ENCODE measurements at regions of chr6 and their contacts with region 1.

Region 1: GRCh38 chr6:142692942-142693341 is 252.0 kb downstream of the HIVEP2 start:
- DNase-seq: peak in 1 of 2 donors; percentile 88
- H3K4me3 ChIP-seq: peak overlapping the region in 1 of 2 donors; percentile 22
- H3K27ac ChIP-seq: peak overlapping the region; percentile 41 to 65
- H3K4me1 ChIP-seq: peaks cover 3 to 37% of the 10 kb centered on the region in 2 donors
- H3K27me3 ChIP-seq: no peaks in the 10 kb centered on the region
- CTCF ChIP-seq: peak; percentile 88 to 94 (median 89)

Region 2: DNA sequence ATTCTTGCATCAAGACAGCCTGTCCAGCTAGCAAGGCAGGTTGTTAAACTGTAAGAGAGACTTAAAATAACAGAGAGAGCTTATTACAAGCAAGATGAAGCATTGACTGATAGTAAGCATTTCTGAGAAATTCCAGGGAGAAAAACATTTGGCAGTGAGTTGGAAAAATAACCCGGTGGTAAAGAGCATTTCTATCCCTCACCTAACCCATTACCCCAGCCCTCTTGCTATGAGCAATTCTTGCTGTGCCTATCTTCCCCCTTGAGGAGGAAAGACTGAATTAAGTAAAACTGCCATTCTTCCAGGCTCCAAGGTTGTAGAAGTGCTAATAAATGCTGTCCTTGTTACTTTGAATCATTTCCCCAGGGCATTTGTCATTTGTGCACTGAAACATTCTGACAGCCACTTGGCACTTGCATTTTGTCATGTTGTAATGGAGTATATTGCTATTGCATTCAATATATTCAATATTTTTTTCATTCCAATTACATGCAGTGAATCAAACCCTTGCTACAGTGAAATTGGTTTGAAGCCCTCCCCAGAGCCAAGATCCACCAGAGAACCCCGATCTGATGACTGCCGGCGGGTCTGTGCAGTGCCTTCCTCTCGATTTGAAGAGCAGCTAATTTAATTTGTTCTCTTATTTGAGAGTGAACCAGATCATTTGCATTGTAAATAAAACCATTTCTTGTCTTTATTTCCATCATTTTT is 39.1 kb before region 1 on chr6:
- intact Hi-C with region 1: no loop called
- DNase-seq: no peak
- H3K4me3 ChIP-seq: no peak overlapping the region
- H3K27ac ChIP-seq: no peak overlapping the region
- H3K4me1 ChIP-seq: no peaks in the 10 kb centered on the region
- H3K27me3 ChIP-seq: no peaks in the 10 kb centered on the region
- CTCF ChIP-seq: no peak

Region 3: DNA sequence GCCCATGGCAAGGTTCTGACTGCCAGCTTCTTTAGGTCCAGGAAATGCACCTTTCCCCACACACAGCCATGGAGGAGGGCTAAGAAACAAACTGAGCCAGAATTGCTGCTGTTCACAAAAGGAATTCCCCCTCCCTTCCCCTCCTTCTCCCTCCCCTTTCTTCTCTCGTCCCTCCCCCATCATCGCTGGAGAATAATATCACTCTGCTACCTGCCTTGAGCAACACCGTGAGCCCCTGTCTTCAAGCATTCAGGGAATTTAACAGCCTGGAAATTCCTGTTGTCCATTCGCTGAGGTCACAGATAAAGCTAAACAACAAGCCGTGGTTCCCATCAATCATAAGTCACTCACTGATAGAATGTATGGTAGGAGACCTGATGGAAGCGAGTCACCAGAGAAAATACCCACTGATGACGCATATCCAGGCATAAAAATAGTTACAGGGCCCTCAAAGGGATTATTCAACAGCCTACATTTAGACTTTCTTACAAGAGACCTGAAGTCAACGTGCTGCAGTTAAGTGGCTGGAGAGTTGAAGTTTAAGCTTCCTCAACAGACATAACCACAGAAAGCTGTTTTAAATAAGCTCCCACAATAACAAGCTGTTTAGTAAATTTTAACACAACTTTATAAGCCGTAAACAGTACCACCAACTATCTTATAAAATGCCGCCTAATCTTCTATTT is 192.4 kb after region 1 on chr6:
- intact Hi-C with region 1: loop called (anchors 2 kb)
- DNase-seq: peak in 1 of 2 donors; percentile 80
- H3K4me3 ChIP-seq: peak overlapping the region; percentile 48 to 60
- H3K27ac ChIP-seq: peak overlapping the region; percentile 52 to 60
- H3K4me1 ChIP-seq: peaks cover 0 to 15% of the 10 kb centered on the region in 2 donors
- H3K27me3 ChIP-seq: no peaks in the 10 kb centered on the region
- CTCF ChIP-seq: no peak

Region 4: GRCh38 chr6:142946181-142946923 is 253.4 kb after region 1 on chr6:
- intact Hi-C with region 1: loop called (anchors 2 kb)
- DNase-seq: peak; percentile 92 to 99
- H3K4me3 ChIP-seq: peak overlapping the region; percentile 74 to 92
- H3K27ac ChIP-seq: peak overlapping the region; percentile 98 to 99
- H3K4me1 ChIP-seq: peaks cover 6 to 11% of the 10 kb centered on the region in 2 donors
- H3K27me3 ChIP-seq: no peaks in the 10 kb centered on the region
- CTCF ChIP-seq: no peak

Region 5: DNA sequence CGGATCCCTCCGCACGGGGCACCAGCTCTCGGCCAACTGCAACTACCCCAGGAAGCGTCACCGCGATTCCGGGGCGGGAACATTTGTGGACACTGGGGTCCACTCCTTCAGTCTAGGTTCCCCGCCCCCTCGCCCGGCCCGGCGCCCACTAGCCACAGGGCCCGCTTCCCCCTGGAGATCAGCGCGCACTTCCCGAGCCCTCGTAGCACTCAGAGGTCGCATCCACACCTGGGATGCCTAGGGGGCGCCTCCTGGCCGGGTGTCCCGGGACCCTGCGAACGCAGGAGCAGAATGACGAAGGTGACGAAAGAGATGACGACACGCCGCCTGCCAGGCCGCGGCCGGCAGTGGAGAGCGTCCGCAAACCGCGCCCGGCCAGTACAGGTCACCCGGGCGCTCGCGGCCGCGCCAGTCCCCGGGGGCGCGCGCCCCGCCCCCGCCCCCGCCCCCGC is 367.4 kb after region 1 on chr6:
- intact Hi-C with region 1: loop called (anchors 10 kb)
- DNase-seq: peak; percentile 75 to 96
- H3K4me3 ChIP-seq: peak overlapping the region; percentile 84 to 89
- H3K27ac ChIP-seq: peak overlapping the region; percentile 89 to 97
- H3K4me1 ChIP-seq: peaks cover 4 to 7% of the 10 kb centered on the region in 2 donors
- H3K27me3 ChIP-seq: no peaks in the 10 kb centered on the region
- CTCF ChIP-seq: peak in 1 of 3 experiments; percentile 6

Region 6: GRCh38 chr6:143286251-143286795 is 593.4 kb after region 1 on chr6:
- intact Hi-C with region 1: loop called (anchors 10 kb)
- DNase-seq: no peak
- H3K4me3 ChIP-seq: no peak overlapping the region
- H3K27ac ChIP-seq: peak overlapping the region in 1 of 2 donors; percentile 12
- H3K4me1 ChIP-seq: peaks cover 0 to 22% of the 10 kb centered on the region in 2 donors
- H3K27me3 ChIP-seq: no peaks in the 10 kb centered on the region
- CTCF ChIP-seq: no peak

Measured in ascending aorta (tissue), 2 donors.